B cell (primary cell): ENCODE measurements at regions of chr19 and their contacts with region 1.

Region 1: GRCh38 chr19:3434712-3435553 is 45.4 kb downstream of the SMIM24 start:
- DNase-seq: peak; percentile 99
- ATAC-seq: peak; percentile 92
- H3K4me3 ChIP-seq: peak overlapping the region; percentile 55 to 89 (median 78)
- H3K4me3 Mint-ChIP-seq: peak overlapping the region; percentile 100
- H3K27ac ChIP-seq: peak overlapping the region; percentile 87 to 96
- H3K27ac Mint-ChIP-seq: peak overlapping the region; percentile 99
- H3K4me1 ChIP-seq: peaks cover 9 to 15% of the 10 kb centered on the region in 2 donors
- H3K4me1 Mint-ChIP-seq: peaks cover 13% of the 10 kb centered on the region
- H3K27me3 ChIP-seq: no peaks in the 10 kb centered on the region
- H3K27me3 Mint-ChIP-seq: no peaks in the 10 kb centered on the region
- CTCF ChIP-seq: no peak

Region 2: GRCh38 chr19:3360421-3361383 is 74.2 kb before region 1 on chr19:
- CTCF ChIA-PET with region 1: interaction called, 8 read pairs
- POLR2A ChIA-PET with region 1: interaction called, 3 read pairs
- intact Hi-C with region 1: loop called (anchors 2 kb)
- DNase-seq: peak; percentile 89
- ATAC-seq: peak; percentile 67
- H3K4me3 ChIP-seq: peak overlapping the region; percentile 53 to 72 (median 67)
- H3K4me3 Mint-ChIP-seq: peak overlapping the region; percentile 94
- H3K27ac ChIP-seq: peak overlapping the region; percentile 29 to 33
- H3K27ac Mint-ChIP-seq: peak overlapping the region; percentile 90
- H3K4me1 ChIP-seq: peaks cover 24 to 38% of the 10 kb centered on the region in 2 donors
- H3K4me1 Mint-ChIP-seq: peaks cover 43% of the 10 kb centered on the region
- H3K27me3 ChIP-seq: peaks cover 0 to 19% (median 8%) of the 10 kb centered on the region in 4 experiments
- H3K27me3 Mint-ChIP-seq: peaks cover 14% of the 10 kb centered on the region
- CTCF ChIP-seq: no peak

Region 3: GRCh38 chr19:3500429-3501130 is 65.6 kb after region 1 on chr19 and contains the start of gene DOHH:
- CTCF ChIA-PET with region 1: interaction called, 6 read pairs
- POLR2A ChIA-PET with region 1: interaction called, 4 read pairs
- intact Hi-C with region 1: loop called (anchors 1 kb)
- DNase-seq: peak; percentile 99
- ATAC-seq: peak; percentile 90
- H3K4me3 ChIP-seq: peak within 1 kb of the TSS; percentile 84 to 95 (median 89)
- H3K4me3 Mint-ChIP-seq: peak within 1 kb of the TSS; percentile 93
- H3K27ac ChIP-seq: peak within 1 kb of the TSS; percentile 93 to 96
- H3K27ac Mint-ChIP-seq: peak within 1 kb of the TSS; percentile 95
- H3K4me1 ChIP-seq: peaks cover 10 to 22% of the 10 kb centered on the region in 2 donors
- H3K4me1 Mint-ChIP-seq: peaks cover 24% of the 10 kb centered on the region
- H3K27me3 ChIP-seq: no peaks in the 10 kb centered on the region
- H3K27me3 Mint-ChIP-seq: no peaks in the 10 kb centered on the region
- CTCF ChIP-seq: no peak
- total RNA-seq, gene DOHH: 8.4 and 8.6 TPM in 2 replicates

Region 4: GRCh38 chr19:3505598-3506383 is 70.9 kb after region 1 on chr19 and contains the start of gene FZR1:
- CTCF ChIA-PET with region 1: interaction called, 6 read pairs
- POLR2A ChIA-PET with region 1: no interaction called
- intact Hi-C with region 1: loop called (anchors 1 kb)
- DNase-seq: peak; percentile 100
- ATAC-seq: peak; percentile 91
- H3K4me3 ChIP-seq: peak within 1 kb of the TSS; percentile 74 to 95 (median 77)
- H3K4me3 Mint-ChIP-seq: peak within 1 kb of the TSS; percentile 92
- H3K27ac ChIP-seq: peak within 1 kb of the TSS; percentile 92 to 94
- H3K27ac Mint-ChIP-seq: peak within 1 kb of the TSS; percentile 99
- H3K4me1 ChIP-seq: peaks cover 12 to 21% of the 10 kb centered on the region in 2 donors
- H3K4me1 Mint-ChIP-seq: peaks cover 49% of the 10 kb centered on the region
- H3K27me3 ChIP-seq: no peaks in the 10 kb centered on the region
- H3K27me3 Mint-ChIP-seq: no peaks in the 10 kb centered on the region
- CTCF ChIP-seq: no peak
- total RNA-seq, gene FZR1: 96.1 and 105 TPM in 2 replicates